ENCODE measurements at regions of chr11 and their contacts with region 1.

Region 1: GRCh38 chr11:86919557-86920210 is 35.5 kb downstream of the FZD4 start:
- DNase-seq: no peak
- H3K4me3 ChIP-seq: no peak overlapping the region
- H3K27ac ChIP-seq: peak overlapping the region in 3 of 4 donors; percentile 1 to 55 (median 23)
- H3K4me1 ChIP-seq: peaks cover 0 to 33% (median 16%) of the 10 kb centered on the region in 4 donors
- H3K27me3 ChIP-seq: no peaks in the 10 kb centered on the region
- CTCF ChIP-seq: peak; percentile 28 to 66 (median 48)
- EP300 ChIP-seq: no peak
- POLR2A ChIP-seq: no peak

Region 2: GRCh38 chr11:86676548-86677154 is 243.0 kb before region 1 on chr11:
- intact Hi-C with region 1: no loop called
- DNase-seq: no peak
- H3K4me3 ChIP-seq: no peak overlapping the region
- H3K27ac ChIP-seq: peak overlapping the region in 3 of 4 donors; percentile 88 to 98 (median 92)
- H3K4me1 ChIP-seq: peaks cover 0 to 66% (median 47%) of the 10 kb centered on the region in 4 donors
- H3K27me3 ChIP-seq: no peaks in the 10 kb centered on the region
- CTCF ChIP-seq: peak in 1 of 4 experiments; percentile 29
- EP300 ChIP-seq: no peak
- POLR2A ChIP-seq: no peak

Region 3: GRCh38 chr11:86869966-86870570 is 49.6 kb before region 1 on chr11:
- intact Hi-C with region 1: loop called (anchors 2 kb)
- DNase-seq: peak; percentile 81
- H3K4me3 ChIP-seq: no peak overlapping the region
- H3K27ac ChIP-seq: no peak overlapping the region
- H3K4me1 ChIP-seq: no peaks in the 10 kb centered on the region
- H3K27me3 ChIP-seq: no peaks in the 10 kb centered on the region
- CTCF ChIP-seq: peak; percentile 59 to 69 (median 62)
- EP300 ChIP-seq: no peak
- POLR2A ChIP-seq: no peak